ENCODE measurements at regions of chr4 and their contacts with region 1.

Region 1: DNA sequence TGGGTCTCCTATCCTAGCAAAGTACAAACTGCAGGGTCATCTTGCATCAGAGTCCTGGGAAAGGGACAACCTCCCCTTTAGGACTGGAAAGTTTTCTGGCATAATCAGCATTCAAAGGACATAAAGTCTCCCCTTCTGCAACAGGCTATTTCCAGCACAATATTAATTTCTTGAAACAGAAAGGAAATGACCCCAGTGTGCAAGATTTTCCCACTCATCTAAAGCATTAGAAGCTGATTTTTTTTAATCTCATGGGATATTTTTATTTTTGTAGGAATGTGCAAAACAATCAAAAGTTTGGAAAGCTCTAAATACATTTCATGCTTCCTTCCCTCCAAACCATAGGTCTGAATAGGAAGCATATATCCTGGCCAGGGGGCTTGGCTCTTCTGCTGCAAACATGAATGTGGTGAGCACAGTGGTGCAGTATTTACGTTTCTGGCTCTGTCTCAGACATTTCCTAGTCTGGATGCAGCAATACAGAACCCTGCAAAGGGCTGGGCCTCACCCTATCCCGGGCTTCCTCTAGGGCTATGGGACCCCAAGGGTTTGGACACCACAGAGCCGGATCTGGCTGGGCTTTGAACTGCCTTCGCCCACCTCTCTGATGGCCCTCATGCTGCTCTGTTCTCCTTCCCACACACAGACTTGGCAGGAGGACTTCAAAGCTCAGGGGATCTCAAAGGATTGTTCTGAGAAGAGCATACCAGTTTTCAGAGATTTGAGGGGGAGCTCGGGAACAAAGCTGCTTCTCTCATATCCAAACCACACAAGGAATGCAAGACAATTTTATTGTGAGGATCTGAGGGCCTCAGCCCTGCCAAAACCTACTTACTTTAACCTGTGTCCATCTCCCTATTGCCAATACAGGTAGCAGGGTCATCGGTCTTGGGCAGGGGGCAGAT is 64.9 kb downstream of the POLR2B start:
- DNase-seq: no peak
- ATAC-seq: peak; percentile 71

Region 2: DNA sequence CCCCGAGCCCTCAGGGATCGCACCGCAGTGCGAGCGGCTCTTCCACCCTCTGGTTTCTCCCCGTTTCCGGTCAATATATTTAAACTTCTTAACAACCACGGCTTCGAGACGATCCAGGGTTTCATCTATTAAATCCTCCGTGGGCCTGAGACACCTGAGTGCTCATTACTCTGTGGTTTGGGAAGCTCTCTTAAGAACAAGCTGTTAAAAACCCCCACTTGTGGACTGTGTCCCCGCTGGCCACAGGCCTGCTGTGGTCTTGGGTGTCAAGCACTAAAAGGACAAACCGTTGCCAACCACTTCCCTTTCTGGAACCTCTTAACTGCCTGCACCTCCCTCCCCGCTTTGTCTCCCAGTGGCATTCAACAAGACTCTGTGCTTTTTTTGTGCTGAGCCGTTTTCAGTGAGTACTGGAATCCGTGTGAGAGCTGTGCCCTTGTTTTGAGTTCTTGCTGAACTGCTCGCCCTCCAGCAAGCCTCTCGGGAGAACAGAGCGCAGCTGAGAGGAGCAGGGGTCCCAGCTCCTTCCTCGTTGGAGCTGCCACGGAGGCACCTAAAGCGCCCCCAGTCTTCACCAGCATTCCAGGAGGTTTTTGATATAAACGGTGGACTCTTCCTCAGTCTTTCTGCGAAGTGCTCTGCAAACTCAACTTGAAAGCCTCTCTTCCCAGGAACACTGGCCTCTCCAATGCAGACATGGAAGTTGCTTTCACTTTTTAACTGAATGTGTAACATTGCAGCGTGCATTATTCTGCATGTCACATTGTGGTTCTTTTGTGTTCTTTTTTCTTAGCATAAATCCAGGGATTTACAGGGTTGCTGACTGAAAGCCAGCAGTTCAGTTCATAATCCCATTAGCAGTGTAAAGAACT is 67.3 kb after region 1 on chr4:
- intact Hi-C with region 1: loop called (anchors 2 kb)
- DNase-seq: peak; percentile 80
- ATAC-seq: peak; percentile 59